CD4-positive, alpha-beta T cell (primary cell): ENCODE measurements at regions of chr2 and their contacts with region 1.

Region 1: GRCh38 chr2:85457877-85458316 is 39.4 kb downstream of the SH2D6 start:
- DNase-seq: no peak
- ATAC-seq: no peak
- H3K4me3 ChIP-seq: no peak overlapping the region
- H3K4me3 Mint-ChIP-seq: no peak overlapping the region
- H3K27ac ChIP-seq: no peak overlapping the region
- H3K27ac Mint-ChIP-seq: no peak overlapping the region
- H3K4me1 ChIP-seq: no peaks in the 10 kb centered on the region
- H3K4me1 Mint-ChIP-seq: no peaks in the 10 kb centered on the region
- H3K27me3 ChIP-seq: no peaks in the 10 kb centered on the region
- H3K27me3 Mint-ChIP-seq: no peaks in the 10 kb centered on the region
- CTCF ChIP-seq: no peak

Region 2: GRCh38 chr2:85106507-85107215 is 351.2 kb before region 1 on chr2:
- CTCF ChIA-PET with region 1: no interaction called
- POLR2A ChIA-PET with region 1: no interaction called
- intact Hi-C with region 1: no loop called
- DNase-seq: no peak
- ATAC-seq: no peak
- H3K4me3 ChIP-seq: no peak overlapping the region
- H3K4me3 Mint-ChIP-seq: no peak overlapping the region
- H3K27ac ChIP-seq: no peak overlapping the region
- H3K27ac Mint-ChIP-seq: no peak overlapping the region
- H3K4me1 ChIP-seq: no peaks in the 10 kb centered on the region
- H3K4me1 Mint-ChIP-seq: no peaks in the 10 kb centered on the region
- H3K27me3 ChIP-seq: peaks cover 0 to under 1% of the 10 kb centered on the region in 2 experiments
- H3K27me3 Mint-ChIP-seq: peaks cover 9% of the 10 kb centered on the region
- CTCF ChIP-seq: no peak

Region 3: GRCh38 chr2:85376291-85377065 is 81.4 kb before region 1 on chr2:
- CTCF ChIA-PET with region 1: no interaction called
- POLR2A ChIA-PET with region 1: no interaction called
- intact Hi-C with region 1: no loop called
- DNase-seq: no peak
- ATAC-seq: no peak
- H3K4me3 ChIP-seq: no peak overlapping the region
- H3K4me3 Mint-ChIP-seq: no peak overlapping the region
- H3K27ac ChIP-seq: no peak overlapping the region
- H3K27ac Mint-ChIP-seq: no peak overlapping the region
- H3K4me1 ChIP-seq: no peaks in the 10 kb centered on the region
- H3K4me1 Mint-ChIP-seq: no peaks in the 10 kb centered on the region
- H3K27me3 ChIP-seq: no peaks in the 10 kb centered on the region
- H3K27me3 Mint-ChIP-seq: no peaks in the 10 kb centered on the region
- CTCF ChIP-seq: no peak

Region 4: GRCh38 chr2:85504778-85505323 is 47.0 kb after region 1 on chr2:
- CTCF ChIA-PET with region 1: no interaction called
- POLR2A ChIA-PET with region 1: no interaction called
- intact Hi-C with region 1: loop called in 1 of 2 experiments (anchors 10 kb)
- DNase-seq: peak in 1 of 14 experiments; percentile 30
- ATAC-seq: no peak
- H3K4me3 ChIP-seq: no peak overlapping the region
- H3K4me3 Mint-ChIP-seq: no peak overlapping the region
- H3K27ac ChIP-seq: no peak overlapping the region
- H3K27ac Mint-ChIP-seq: no peak overlapping the region
- H3K4me1 ChIP-seq: no peaks in the 10 kb centered on the region
- H3K4me1 Mint-ChIP-seq: no peaks in the 10 kb centered on the region
- H3K27me3 ChIP-seq: no peaks in the 10 kb centered on the region
- H3K27me3 Mint-ChIP-seq: no peaks in the 10 kb centered on the region
- CTCF ChIP-seq: no peak